H1 (cell line): ENCODE measurements at regions of chr5 and their contacts with region 1.

Region 1: GRCh38 chr5:112419986-112420864 is 1.1 kb upstream of the EPB41L4A start:
- DNase-seq: peak; percentile 51 to 90
- H3K4me3 ChIP-seq: peak overlapping the region; percentile 60 to 88 (median 80)
- H3K27ac ChIP-seq: no peak overlapping the region
- H3K4me1 ChIP-seq: peaks cover 0 to 10% (median under 1%) of the 10 kb centered on the region in 4 experiments; a peak in 2 of 7 replicates
- H3K27me3 ChIP-seq: peaks cover 5 to 43% (median 23%) of the 10 kb centered on the region in 4 experiments
- CTCF ChIP-seq: peak; percentile 90 to 96 (median 91)
- EP300 ChIP-seq: no peak; a peak in 1 of 3 replicates
- POLR2A ChIP-seq: no peak
- RAD21 ChIP-seq: peak; percentile 87 to 94

Region 2: GRCh38 chr5:112165897-112166806 is 254.1 kb before region 1 on chr5:
- CTCF ChIA-PET with region 1: interaction called, 10 read pairs
- POLR2A ChIA-PET with region 1: interaction called, 24 read pairs
- DNase-seq: peak in 1 of 2 experiments; percentile 51
- H3K4me3 ChIP-seq: no peak overlapping the region
- H3K27ac ChIP-seq: peak overlapping the region; percentile 66
- H3K4me1 ChIP-seq: peaks cover 3 to 19% (median 10%) of the 10 kb centered on the region in 4 experiments; a peak in 4 of 7 replicates
- H3K27me3 ChIP-seq: no peaks in the 10 kb centered on the region
- CTCF ChIP-seq: no peak
- EP300 ChIP-seq: peak in 1 of 2 experiments; percentile 29; a peak in 1 of 3 replicates
- POLR2A ChIP-seq: peak; percentile 68 to 82
- RAD21 ChIP-seq: no peak

Region 3: GRCh38 chr5:112196584-112196983 is 223.6 kb before region 1 on chr5:
- CTCF ChIA-PET with region 1: interaction called, 15 read pairs
- POLR2A ChIA-PET with region 1: no interaction called
- DNase-seq: no peak
- H3K4me3 ChIP-seq: no peak overlapping the region
- H3K27ac ChIP-seq: no peak overlapping the region
- H3K4me1 ChIP-seq: no peaks in the 10 kb centered on the region
- H3K27me3 ChIP-seq: no peaks in the 10 kb centered on the region
- CTCF ChIP-seq: no peak
- EP300 ChIP-seq: no peak
- POLR2A ChIP-seq: no peak
- RAD21 ChIP-seq: no peak

Region 4: DNA sequence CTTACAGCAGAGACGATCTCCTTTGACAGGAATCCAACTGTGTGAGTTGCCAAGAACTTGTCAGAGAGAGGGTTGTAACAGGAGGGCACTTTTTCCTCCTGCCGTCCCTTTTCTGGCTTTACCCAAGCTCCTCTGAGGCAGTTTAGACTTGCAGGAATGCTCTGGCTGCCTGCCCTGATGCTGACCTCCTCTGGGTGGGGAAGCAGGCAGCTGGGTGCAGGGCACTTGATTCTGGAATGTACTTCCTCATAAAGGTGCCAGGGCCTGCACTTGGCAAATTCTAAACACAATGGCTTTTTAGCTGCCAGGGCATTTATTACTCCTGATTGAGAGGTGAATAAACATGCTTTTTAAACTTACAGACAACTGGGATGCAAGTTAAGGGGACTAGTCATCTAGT is 191.6 kb before region 1 on chr5:
- CTCF ChIA-PET with region 1: interaction called, 10 read pairs
- POLR2A ChIA-PET with region 1: no interaction called
- DNase-seq: no peak
- H3K4me3 ChIP-seq: no peak overlapping the region
- H3K27ac ChIP-seq: no peak overlapping the region
- H3K4me1 ChIP-seq: peaks cover 0 to 9% (median 3%) of the 10 kb centered on the region in 4 experiments; a peak in 4 of 7 replicates
- H3K27me3 ChIP-seq: no peaks in the 10 kb centered on the region
- CTCF ChIP-seq: no peak
- EP300 ChIP-seq: no peak
- POLR2A ChIP-seq: no peak
- RAD21 ChIP-seq: no peak

Region 5: GRCh38 chr5:112338681-112339337 is 81.4 kb before region 1 on chr5:
- CTCF ChIA-PET with region 1: no interaction called
- POLR2A ChIA-PET with region 1: no interaction called
- DNase-seq: no peak
- H3K4me3 ChIP-seq: no peak overlapping the region
- H3K27ac ChIP-seq: no peak overlapping the region
- H3K4me1 ChIP-seq: peaks cover 0 to 7% (median 4%) of the 10 kb centered on the region in 4 experiments; a peak in 5 of 7 replicates
- H3K27me3 ChIP-seq: no peaks in the 10 kb centered on the region
- CTCF ChIP-seq: no peak
- EP300 ChIP-seq: no peak
- POLR2A ChIP-seq: no peak
- RAD21 ChIP-seq: no peak

Region 6: GRCh38 chr5:112372539-112372938 is 47.7 kb before region 1 on chr5:
- CTCF ChIA-PET with region 1: interaction called, 10 read pairs
- POLR2A ChIA-PET with region 1: no interaction called
- DNase-seq: no peak
- H3K4me3 ChIP-seq: no peak overlapping the region
- H3K27ac ChIP-seq: no peak overlapping the region
- H3K4me1 ChIP-seq: no peaks in the 10 kb centered on the region
- H3K27me3 ChIP-seq: no peaks in the 10 kb centered on the region
- CTCF ChIP-seq: peak in 1 of 3 experiments; percentile 31; a peak in 2 of 4 replicates
- EP300 ChIP-seq: no peak
- POLR2A ChIP-seq: no peak
- RAD21 ChIP-seq: peak; percentile 12 to 22; a peak in 2 of 4 replicates

Region 7: GRCh38 chr5:112434641-112435040 is 14.4 kb after region 1 on chr5:
- CTCF ChIA-PET with region 1: interaction called, 33 read pairs
- POLR2A ChIA-PET with region 1: no interaction called
- DNase-seq: no peak
- H3K4me3 ChIP-seq: no peak overlapping the region
- H3K27ac ChIP-seq: no peak overlapping the region
- H3K4me1 ChIP-seq: no peaks in the 10 kb centered on the region
- H3K27me3 ChIP-seq: no peaks in the 10 kb centered on the region
- CTCF ChIP-seq: no peak
- EP300 ChIP-seq: no peak
- POLR2A ChIP-seq: no peak
- RAD21 ChIP-seq: no peak

Region 8: GRCh38 chr5:113123618-113124017 is 703.4 kb after region 1 on chr5:
- CTCF ChIA-PET with region 1: no interaction called
- POLR2A ChIA-PET with region 1: no interaction called
- DNase-seq: no peak
- H3K4me3 ChIP-seq: no peak overlapping the region
- H3K27ac ChIP-seq: no peak overlapping the region
- H3K4me1 ChIP-seq: peaks cover 0 to 2% (median 0%) of the 10 kb centered on the region in 4 experiments; a peak in 1 of 7 replicates
- H3K27me3 ChIP-seq: no peaks in the 10 kb centered on the region
- CTCF ChIP-seq: peak; percentile 14 to 68 (median 57)
- EP300 ChIP-seq: no peak
- POLR2A ChIP-seq: no peak
- RAD21 ChIP-seq: peak; percentile 60 to 73